Aorta (tissue), 5 donors: ENCODE measurements at regions of chr12 and their contacts with region 1.

Region 1: DNA sequence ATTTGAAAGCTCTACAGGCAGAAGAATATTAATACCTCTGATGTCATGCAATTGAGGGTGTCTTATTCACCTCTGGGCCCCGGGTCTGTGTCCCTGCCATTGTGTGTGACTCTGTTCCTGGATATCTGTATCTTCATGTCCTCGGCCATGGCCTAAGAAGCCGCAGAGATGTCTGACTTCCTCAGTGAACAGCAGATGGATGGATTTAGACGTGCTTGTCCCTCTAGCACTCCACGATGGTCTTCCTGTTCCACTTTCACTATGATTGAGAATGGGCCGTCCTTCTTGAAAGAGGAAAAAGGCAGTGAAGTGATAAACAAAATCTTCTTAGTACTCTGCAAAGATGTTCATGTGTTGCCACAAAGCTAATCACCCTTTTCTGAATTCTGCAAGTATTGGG is 217.4 kb downstream of the SLC41A2 start:
- DNase-seq: no peak
- ATAC-seq: no peak
- H3K4me3 ChIP-seq: no peak overlapping the region
- H3K27ac ChIP-seq: no peak overlapping the region
- H3K4me1 ChIP-seq: peaks cover 2 to 3% of the 10 kb centered on the region in 2 donors
- H3K27me3 ChIP-seq: no peaks in the 10 kb centered on the region

Region 2: GRCh38 chr12:105013892-105014291 is 273.2 kb after region 1 on chr12:
- intact Hi-C with region 1: no loop called
- DNase-seq: no peak
- ATAC-seq: no peak
- H3K4me3 ChIP-seq: no peak overlapping the region
- H3K27ac ChIP-seq: no peak overlapping the region
- H3K4me1 ChIP-seq: no peaks in the 10 kb centered on the region
- H3K27me3 ChIP-seq: no peaks in the 10 kb centered on the region

Region 3: DNA sequence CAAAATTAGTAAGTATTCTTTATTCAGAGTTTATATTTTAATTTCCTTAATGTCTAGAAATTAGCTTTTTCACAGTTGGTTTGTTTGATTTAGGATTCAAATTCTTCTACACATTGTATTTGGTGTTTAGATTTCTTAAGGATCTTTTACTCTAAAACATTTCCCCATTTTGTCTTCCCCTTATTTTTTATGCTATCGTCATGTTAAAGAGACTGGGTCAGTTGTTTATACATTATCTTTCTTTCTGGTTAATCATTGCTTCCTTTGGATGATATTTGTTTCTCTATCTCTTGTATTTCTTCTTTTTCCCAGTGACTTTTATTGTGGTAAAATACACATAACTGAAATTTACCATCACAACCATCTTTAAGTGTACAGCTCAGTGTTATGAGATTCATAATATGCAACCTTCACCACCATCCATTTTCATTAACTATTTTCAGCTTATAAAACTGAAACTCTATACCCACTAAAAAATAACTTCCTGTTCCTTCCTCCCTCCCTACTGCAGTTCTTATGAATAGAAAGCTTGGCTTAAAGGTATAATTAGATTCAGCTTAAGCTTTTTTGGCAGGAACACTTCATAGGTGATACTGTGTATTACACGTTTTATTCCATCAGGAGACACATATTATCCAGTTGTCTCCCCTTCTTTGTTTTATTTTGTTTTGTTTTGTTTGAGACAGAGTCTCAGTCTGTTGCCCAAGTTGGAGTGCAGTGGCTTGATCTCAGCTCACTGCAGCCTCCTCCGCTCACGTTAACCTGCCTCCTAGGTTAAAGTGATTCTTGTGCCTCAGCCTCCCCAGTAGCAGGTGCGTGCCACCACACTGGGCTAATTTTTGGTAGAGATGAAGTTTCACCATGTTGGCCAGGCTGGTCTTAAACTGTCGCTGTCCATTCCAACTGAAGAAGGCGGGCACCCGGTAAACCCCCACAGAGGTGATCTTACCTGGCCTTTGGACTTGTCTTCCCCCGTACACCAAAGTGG is 290.4 kb after region 1 on chr12:
- intact Hi-C with region 1: loop called in 1 of 2 experiments (anchors 10 kb)
- DNase-seq: no peak
- ATAC-seq: no peak
- H3K4me3 ChIP-seq: no peak overlapping the region
- H3K27ac ChIP-seq: no peak overlapping the region
- H3K4me1 ChIP-seq: peaks cover 2 to 3% of the 10 kb centered on the region in 2 donors
- H3K27me3 ChIP-seq: no peaks in the 10 kb centered on the region